Activated naive CD4-positive, alpha-beta T cell treated with anti-CD3 and anti-CD28 coated beads, Interleukin-2, amount 10 ng/mL, durations not matched to agents 7 days and 5 days (primary cell): ENCODE measurements at regions of chr11 and their contacts with region 1.

Region 1: DNA sequence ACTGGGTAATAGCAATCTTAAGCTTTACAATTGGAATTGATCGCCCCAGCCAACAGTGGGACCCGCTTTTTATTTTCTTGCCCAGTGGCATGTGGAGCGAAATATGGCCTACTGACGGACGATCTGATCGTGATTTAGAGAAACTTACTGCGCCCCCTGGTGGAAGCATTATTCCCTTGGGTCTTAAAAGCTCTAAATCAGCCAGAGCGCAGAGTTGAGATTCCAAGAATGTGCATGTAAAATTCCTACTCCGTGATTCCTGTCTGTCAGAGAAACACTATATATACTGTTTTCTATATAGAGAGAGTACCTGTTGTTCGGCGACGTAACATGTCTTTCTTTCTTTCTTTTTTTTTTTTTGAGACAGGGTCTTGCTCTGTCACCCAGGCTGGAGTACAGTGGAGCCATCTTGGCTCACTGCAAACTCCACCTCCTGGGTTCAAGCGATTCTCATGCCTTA is 3.7 kb upstream of the DPF2 start:
- DNase-seq: peak; percentile 88
- H3K4me3 Mint-ChIP-seq: no peak overlapping the region
- H3K27ac Mint-ChIP-seq: no peak overlapping the region
- H3K4me1 Mint-ChIP-seq: peaks cover 19% of the 10 kb centered on the region
- H3K27me3 Mint-ChIP-seq: peaks cover 11% of the 10 kb centered on the region

Region 2: DNA sequence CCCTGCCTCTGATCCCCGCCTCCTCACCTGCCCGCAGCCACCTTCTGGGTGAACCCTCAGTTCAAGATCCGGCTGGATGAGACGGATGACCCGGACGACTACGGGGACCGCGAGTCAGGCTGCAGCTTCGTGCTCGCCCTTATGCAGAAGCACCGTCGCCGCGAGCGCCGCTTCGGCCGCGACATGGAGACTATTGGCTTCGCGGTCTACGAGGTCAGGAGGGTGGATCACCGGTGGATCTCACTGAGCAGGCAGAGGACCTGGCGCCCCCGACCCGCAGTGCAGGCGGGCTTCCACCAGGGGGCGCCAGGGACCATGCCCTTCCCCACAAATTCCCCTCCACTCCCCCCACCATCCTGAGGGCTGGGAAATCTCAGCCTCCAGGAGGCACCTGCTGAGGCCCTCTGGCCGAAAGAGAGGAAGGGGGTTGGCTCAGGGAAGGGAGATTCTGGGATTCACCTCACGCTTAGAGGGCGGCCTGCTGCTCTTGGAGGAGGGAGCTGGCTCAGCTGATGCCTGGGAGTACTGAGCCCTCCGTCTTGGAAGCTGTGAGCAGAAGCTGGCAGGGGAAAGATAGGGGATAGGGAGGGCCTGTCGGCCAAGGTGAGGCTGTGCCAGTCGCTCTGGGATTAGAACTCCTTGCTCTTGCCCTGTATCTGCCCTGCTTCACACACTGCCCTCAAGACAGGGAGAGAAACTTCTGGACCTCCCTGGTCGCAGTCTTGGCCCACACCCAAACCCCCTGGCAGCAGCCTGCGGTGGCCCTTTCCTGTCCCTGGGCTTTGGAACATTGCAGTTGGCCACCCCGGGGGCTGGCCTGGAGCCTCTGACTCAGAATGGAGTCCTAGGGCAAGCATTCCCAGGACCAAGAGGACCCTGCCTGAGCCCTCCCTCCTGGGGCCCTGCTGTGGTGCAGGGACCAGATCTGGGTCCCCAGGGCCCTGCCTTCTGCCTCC is 125.0 kb before region 1 on chr11:
- CTCF ChIA-PET with region 1: interaction called, 19 read pairs
- DNase-seq: peak; percentile 63
- H3K4me3 Mint-ChIP-seq: no peak overlapping the region
- H3K27ac Mint-ChIP-seq: no peak overlapping the region
- H3K4me1 Mint-ChIP-seq: peaks cover 6% of the 10 kb centered on the region
- H3K27me3 Mint-ChIP-seq: no peaks in the 10 kb centered on the region

Region 3: DNA sequence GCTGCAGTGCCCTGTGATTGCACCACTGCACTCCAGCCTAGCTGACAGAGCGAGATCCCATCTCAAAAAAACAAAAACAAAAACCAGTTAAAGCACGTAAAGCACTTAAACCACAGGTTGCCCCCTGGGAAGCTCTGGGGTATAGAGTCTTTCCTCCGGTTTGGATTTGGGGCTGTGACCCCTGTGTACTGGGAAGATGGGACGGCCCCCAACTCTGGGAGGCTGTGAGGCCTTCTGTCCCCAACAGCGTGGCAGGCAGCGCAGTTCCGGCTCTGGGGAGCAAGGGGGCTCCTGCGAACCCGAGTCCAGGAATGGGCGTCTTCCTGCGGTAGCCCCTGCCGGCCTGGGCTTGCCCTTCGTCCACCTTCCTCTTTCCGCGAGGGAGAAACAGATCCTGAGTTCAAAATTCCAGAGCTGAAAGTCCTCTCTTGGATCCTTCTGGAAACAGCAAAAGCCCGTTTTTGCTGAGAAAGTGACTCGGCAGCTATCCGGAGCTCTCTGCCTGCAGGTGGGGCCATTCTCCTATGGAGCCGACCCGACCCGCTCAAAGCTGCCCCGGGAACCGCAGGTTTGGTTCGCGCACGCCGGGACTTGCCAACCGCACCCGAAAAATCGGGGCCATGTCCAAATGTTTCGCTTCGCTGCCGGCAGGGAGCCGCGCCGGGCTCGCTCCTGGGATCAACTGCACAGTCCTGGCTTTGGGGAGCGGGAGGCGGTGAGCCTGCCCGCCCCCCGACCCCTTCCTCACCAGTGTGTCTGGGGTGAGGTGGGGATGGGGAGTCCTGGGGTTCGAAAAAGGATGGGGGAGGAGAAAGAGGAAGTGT is 104.5 kb before region 1 on chr11:
- CTCF ChIA-PET with region 1: interaction called, 50 read pairs
- DNase-seq: peak; percentile 78
- H3K4me3 Mint-ChIP-seq: peak overlapping the region; percentile 64
- H3K27ac Mint-ChIP-seq: no peak overlapping the region
- H3K4me1 Mint-ChIP-seq: peaks cover 18% of the 10 kb centered on the region
- H3K27me3 Mint-ChIP-seq: peaks cover 63% of the 10 kb centered on the region

Region 4: GRCh38 chr11:65274735-65275682 is 55.0 kb before region 1 on chr11:
- CTCF ChIA-PET with region 1: interaction called, 28 read pairs
- DNase-seq: peak; percentile 58
- H3K4me3 Mint-ChIP-seq: no peak overlapping the region
- H3K27ac Mint-ChIP-seq: no peak overlapping the region
- H3K4me1 Mint-ChIP-seq: peaks cover 2% of the 10 kb centered on the region
- H3K27me3 Mint-ChIP-seq: no peaks in the 10 kb centered on the region

Region 5: DNA sequence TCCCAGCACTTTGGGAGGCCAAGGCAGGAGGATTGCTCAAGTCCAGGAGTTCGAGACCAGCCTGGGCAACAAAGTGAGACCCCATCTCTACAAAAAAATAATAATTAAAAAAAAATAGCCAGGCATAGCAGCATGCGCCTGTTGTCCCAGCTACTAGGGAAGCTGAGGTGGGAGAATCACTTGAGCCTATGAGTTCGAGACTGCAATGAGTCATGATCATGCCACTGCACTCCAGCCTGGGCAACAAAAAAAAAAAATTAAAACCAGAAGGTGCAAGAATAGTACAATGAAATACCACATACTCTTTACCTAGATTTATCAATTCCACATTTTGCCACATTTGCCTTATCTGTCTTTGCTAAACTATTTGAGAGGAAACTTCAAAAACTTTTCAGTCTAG is 11.9 kb after region 1 on chr11:
- CTCF ChIA-PET with region 1: interaction called, 15 read pairs
- DNase-seq: no peak
- H3K4me3 Mint-ChIP-seq: no peak overlapping the region
- H3K27ac Mint-ChIP-seq: no peak overlapping the region
- H3K4me1 Mint-ChIP-seq: peaks cover 14% of the 10 kb centered on the region
- H3K27me3 Mint-ChIP-seq: no peaks in the 10 kb centered on the region